K562 (cell line): ENCODE measurements at regions of chr15 and their contacts with region 1.

Region 1: GRCh38 chr15:81480645-81481053 is 106.6 kb upstream of the TMC3 start:
- DNase-seq: peak; percentile 27 to 69 (median 40)
- ATAC-seq: peak; percentile 82
- H3K4me3 ChIP-seq: no peak overlapping the region
- H3K27ac ChIP-seq: no peak overlapping the region
- H3K4me1 ChIP-seq: no peaks in the 10 kb centered on the region
- H3K27me3 ChIP-seq: peaks cover 9 to 22% of the 10 kb centered on the region in 2 experiments; a peak in 3 of 5 replicates
- CTCF ChIP-seq: peak; percentile 50 to 87 (median 79); a peak in 5 of 6 replicates
- EP300 ChIP-seq: no peak
- POLR2A ChIP-seq: no peak
- RAD21 ChIP-seq: peak; percentile 85 to 95

Region 2: DNA sequence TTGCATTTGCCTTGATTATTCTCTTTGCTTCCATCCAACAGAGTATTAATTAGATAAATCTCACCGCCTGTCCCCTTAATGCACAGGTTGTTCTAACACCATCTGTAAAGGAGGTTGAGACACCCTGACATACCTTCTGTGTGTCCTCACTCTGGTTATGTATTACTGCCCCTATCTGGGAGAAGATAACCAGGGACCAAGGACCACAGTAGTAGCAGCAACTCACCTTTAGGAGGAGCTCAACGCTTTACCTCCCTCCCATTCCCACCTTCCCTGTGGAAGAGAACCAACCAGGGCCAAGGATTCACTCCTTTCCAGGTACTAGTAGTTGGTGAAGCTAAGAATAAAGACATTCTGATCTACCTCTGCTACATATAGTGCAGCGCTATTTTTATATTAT is 332.5 kb after region 1 on chr15:
- CTCF ChIA-PET with region 1: no interaction called
- POLR2A ChIA-PET with region 1: no interaction called
- in situ Hi-C with region 1: no loop called
- intact Hi-C with region 1: loop called (anchors 2 kb)
- DNase-seq: peak; percentile 14 to 46 (median 26)
- ATAC-seq: peak; percentile 87
- H3K4me3 ChIP-seq: no peak overlapping the region
- H3K27ac ChIP-seq: no peak overlapping the region
- H3K4me1 ChIP-seq: no peaks in the 10 kb centered on the region
- H3K27me3 ChIP-seq: no peaks in the 10 kb centered on the region
- CTCF ChIP-seq: peak; percentile 55 to 83 (median 73)
- EP300 ChIP-seq: no peak
- POLR2A ChIP-seq: no peak
- RAD21 ChIP-seq: peak; percentile 52 to 82

Region 3: DNA sequence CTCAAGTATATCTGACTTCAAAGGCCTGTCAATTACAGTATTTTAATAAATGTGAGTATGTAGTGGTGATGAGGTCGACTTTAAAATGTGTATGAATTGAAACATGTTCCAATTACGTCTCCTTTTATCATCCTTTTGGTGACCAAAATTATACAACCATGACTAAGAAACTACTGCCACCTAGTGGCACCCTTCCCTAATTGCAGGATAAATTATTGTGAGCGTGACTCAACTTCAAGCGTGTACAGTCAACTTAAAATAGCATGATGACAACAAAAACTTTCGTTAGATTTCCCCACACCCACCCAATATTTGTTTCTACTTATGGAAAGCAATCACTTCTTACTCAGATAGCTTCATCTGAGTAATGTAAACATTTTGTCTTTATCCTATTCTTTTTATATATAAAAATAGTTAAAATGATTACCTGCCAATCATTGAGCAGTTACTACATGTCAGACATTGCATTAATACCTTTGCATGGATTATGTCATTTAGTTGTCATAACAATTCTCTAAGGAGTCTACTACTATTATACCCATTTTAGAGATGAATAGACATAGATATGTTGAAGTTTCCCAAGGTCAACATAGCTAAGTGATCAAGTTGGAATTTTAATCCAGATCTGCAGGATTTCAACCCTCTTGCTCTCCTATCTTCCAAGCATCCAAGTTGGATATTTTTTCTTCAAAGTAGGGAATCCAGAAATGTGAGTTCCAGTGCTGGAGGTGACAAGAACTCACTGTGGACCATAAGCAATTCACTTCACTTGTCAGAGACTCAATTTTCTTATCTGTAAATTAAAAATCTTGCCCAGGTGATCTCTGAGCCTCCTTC is 459.2 kb after region 1 on chr15:
- CTCF ChIA-PET with region 1: no interaction called
- POLR2A ChIA-PET with region 1: no interaction called
- in situ Hi-C with region 1: no loop called
- intact Hi-C with region 1: loop called (anchors 1 kb)
- DNase-seq: peak; percentile 51 to 73 (median 56)
- ATAC-seq: no peak
- H3K4me3 ChIP-seq: no peak overlapping the region
- H3K27ac ChIP-seq: peak overlapping the region; percentile 21; the same call in 1 of the 3 replicates
- H3K4me1 ChIP-seq: peaks cover 21 to 41% of the 10 kb centered on the region in 2 experiments
- H3K27me3 ChIP-seq: no peaks in the 10 kb centered on the region
- CTCF ChIP-seq: peak; percentile 45 to 79 (median 79); a peak in 5 of 6 replicates
- EP300 ChIP-seq: peak; percentile 30; the same call in 1 of the 2 replicates
- POLR2A ChIP-seq: no peak
- RAD21 ChIP-seq: peak; percentile 86 to 92

Region 4: GRCh38 chr15:82030176-82030687 is 549.6 kb after region 1 on chr15:
- CTCF ChIA-PET with region 1: no interaction called
- POLR2A ChIA-PET with region 1: no interaction called
- in situ Hi-C with region 1: no loop called
- intact Hi-C with region 1: no loop called
- DNase-seq: no peak
- ATAC-seq: no peak
- H3K4me3 ChIP-seq: no peak overlapping the region
- H3K27ac ChIP-seq: no peak overlapping the region
- H3K4me1 ChIP-seq: 0 out of 5 replicates have a peak, but pooled peaks cover 0 to 3% of the 10 kb centered on the region in 2 experiments
- H3K27me3 ChIP-seq: no peaks in the 10 kb centered on the region
- CTCF ChIP-seq: no peak
- EP300 ChIP-seq: no peak
- POLR2A ChIP-seq: no peak
- RAD21 ChIP-seq: no peak

Region 5: DNA sequence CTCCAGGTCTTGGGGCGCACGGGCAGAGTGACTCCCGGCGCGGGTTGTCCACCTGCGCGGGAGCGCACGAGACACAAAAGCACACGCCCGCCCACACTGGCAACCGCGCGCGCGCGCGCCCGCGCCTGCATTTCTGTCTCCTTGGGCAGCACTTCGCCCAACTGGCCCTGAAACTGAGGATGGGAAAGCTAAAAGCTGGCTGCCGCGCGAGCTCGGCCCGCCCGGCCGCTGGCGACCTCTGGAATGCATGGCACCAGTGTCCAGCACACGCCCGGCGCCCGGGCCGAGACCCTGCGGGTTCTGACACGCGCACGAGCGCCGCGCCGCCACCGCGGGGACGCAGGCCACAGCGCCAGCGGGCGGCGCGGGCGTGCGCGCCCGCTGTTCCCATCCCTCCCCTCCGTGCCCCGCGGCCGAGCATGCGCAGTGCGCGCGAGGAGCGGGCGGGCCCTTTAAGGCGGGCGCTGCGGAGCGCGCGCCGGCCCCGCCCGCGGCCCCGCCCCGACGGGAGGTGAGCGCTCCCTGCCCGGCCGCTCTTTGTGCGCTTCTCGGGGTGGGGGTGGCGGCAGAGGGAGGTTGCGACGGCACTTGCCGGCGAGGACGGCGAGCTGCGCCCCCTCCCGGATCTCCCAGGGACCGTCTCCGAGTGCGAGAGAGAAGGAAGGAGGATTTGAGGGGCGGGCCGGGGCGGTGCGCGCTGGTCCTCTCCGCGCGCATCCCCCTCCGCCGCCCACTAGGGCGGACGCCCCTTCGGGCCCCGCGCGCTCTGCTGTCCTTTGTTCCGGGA is 566.2 kb after region 1 on chr15:
- CTCF ChIA-PET with region 1: interaction called, 7 read pairs
- POLR2A ChIA-PET with region 1: no interaction called
- in situ Hi-C with region 1: no loop called
- intact Hi-C with region 1: loop called (anchors 1 kb)
- DNase-seq: peak; percentile 94 to 98 (median 97)
- ATAC-seq: peak; percentile 85
- H3K4me3 ChIP-seq: peak overlapping the region; percentile 86
- H3K27ac ChIP-seq: peak overlapping the region; percentile 96
- H3K4me1 ChIP-seq: peaks cover 2 to 44% of the 10 kb centered on the region in 2 experiments; a peak in 4 of 5 replicates
- H3K27me3 ChIP-seq: no peaks in the 10 kb centered on the region
- CTCF ChIP-seq: peak; percentile 66 to 80 (median 80)
- EP300 ChIP-seq: no peak; the same call in 1 of the 2 replicates
- POLR2A ChIP-seq: peak; percentile 75; the same call in 1 of the 2 replicates
- RAD21 ChIP-seq: peak; percentile 89 to 93

Region 6: GRCh38 chr15:82093774-82094211 is 613.1 kb after region 1 on chr15:
- CTCF ChIA-PET with region 1: no interaction called
- POLR2A ChIA-PET with region 1: no interaction called
- in situ Hi-C with region 1: no loop called
- intact Hi-C with region 1: loop called (anchors 5 kb)
- DNase-seq: peak; percentile 40 to 78 (median 53)
- ATAC-seq: peak; percentile 97
- H3K4me3 ChIP-seq: peak overlapping the region; percentile 9; the same call in 1 of the 2 replicates
- H3K27ac ChIP-seq: no peak overlapping the region
- H3K4me1 ChIP-seq: peaks cover 0 to 16% of the 10 kb centered on the region in 2 experiments; a peak in 3 of 5 replicates
- H3K27me3 ChIP-seq: peaks cover 0 to 1% of the 10 kb centered on the region in 2 experiments; a peak in 1 of 5 replicates
- CTCF ChIP-seq: no peak
- EP300 ChIP-seq: peak; percentile 73
- POLR2A ChIP-seq: no peak
- RAD21 ChIP-seq: no peak

Region 7: DNA sequence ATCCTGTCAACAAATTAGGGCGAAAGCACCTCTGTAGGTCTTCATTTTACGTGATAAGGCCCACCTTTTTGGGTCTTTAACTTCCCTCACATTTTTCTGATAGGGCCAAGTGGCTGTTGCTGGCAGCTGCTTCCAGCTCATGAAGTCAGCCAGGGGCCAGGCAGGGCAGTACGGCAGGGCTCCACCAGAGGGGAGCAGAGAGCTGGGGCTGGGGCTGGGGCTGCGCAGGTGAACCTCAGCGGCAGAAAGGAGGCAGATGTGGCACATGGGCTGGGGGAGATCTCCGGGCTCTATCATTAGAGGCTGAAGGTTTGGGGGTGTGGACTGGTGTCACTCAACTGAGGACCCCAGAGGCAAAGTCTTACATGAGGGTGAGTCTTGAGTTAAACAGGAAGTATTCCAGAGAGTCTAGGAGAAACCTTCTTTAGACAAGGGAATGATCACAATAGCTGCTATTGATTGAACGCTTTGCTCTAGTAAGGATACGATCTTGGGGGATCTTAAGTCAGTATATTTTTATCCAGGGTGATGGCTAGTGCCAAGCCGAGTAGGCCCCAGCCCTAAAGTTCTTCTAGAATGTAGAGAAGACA is 627.9 kb after region 1 on chr15:
- CTCF ChIA-PET with region 1: interaction called, 3 read pairs
- POLR2A ChIA-PET with region 1: no interaction called
- in situ Hi-C with region 1: loop called (anchors 25 kb)
- intact Hi-C with region 1: loop called (anchors 2 kb)
- DNase-seq: peak; percentile 78 to 88 (median 85)
- ATAC-seq: peak; percentile 97
- H3K4me3 ChIP-seq: no peak overlapping the region
- H3K27ac ChIP-seq: no peak overlapping the region
- H3K4me1 ChIP-seq: peaks cover 5 to 15% of the 10 kb centered on the region in 2 experiments; a peak in 4 of 5 replicates
- H3K27me3 ChIP-seq: peaks cover 8 to 17% of the 10 kb centered on the region in 2 experiments; a peak in 4 of 5 replicates
- CTCF ChIP-seq: peak; percentile 86 to 98 (median 87)
- EP300 ChIP-seq: no peak
- POLR2A ChIP-seq: no peak
- RAD21 ChIP-seq: peak; percentile 79 to 92

Region 8: DNA sequence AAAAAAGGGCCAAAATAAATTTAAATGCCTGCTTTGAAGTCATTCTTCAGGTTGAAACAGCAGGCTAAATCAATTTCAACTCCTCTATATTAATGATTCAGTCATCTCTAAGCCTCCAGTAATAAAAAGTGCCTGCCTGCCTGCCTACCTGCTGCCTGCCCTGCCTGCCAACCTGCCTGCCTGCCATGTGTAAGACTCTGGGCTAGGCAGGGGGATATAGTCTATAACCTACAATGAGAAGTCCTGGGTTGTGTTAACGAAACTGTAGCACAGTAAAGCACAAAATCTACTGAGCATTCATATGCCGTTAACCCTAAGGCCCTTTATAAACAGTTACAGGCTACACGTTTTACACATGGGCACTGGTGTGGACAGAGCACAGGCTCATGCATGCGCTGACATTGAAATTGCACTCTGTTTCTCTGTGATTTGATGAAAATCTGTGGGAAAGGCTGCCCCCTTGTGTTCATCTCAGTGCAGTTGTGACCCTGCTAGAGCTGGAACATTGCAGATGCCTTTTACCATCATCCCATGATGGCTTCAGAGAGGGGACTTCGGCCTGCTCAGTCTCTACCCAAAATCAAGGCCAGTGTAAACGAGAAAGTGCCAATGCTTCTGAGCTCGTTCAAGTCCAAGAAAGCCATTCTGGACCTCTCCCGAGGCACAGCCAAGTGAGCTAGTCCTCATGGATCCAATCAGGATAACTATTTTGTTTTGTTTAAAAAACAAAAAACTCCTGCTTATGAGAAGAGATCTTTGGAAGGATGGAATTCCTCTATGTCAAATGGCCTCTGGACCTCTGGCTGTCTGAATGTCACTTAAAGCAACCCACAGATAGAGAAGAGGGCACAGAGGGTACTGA is 717.3 kb after region 1 on chr15:
- CTCF ChIA-PET with region 1: interaction called, 11 read pairs
- POLR2A ChIA-PET with region 1: no interaction called
- in situ Hi-C with region 1: loop called (anchors 10 kb)
- intact Hi-C with region 1: loop called (anchors 2 kb)
- DNase-seq: peak; percentile 42 to 75 (median 54)
- ATAC-seq: peak; percentile 98
- H3K4me3 ChIP-seq: no peak overlapping the region
- H3K27ac ChIP-seq: no peak overlapping the region
- H3K4me1 ChIP-seq: no peaks in the 10 kb centered on the region
- H3K27me3 ChIP-seq: no peaks in the 10 kb centered on the region
- CTCF ChIP-seq: peak; percentile 65 to 82 (median 71)
- EP300 ChIP-seq: no peak
- POLR2A ChIP-seq: no peak
- RAD21 ChIP-seq: peak; percentile 49 to 81